ENCODE measurements at regions of chr14 and their contacts with region 1.

Region 1: DNA sequence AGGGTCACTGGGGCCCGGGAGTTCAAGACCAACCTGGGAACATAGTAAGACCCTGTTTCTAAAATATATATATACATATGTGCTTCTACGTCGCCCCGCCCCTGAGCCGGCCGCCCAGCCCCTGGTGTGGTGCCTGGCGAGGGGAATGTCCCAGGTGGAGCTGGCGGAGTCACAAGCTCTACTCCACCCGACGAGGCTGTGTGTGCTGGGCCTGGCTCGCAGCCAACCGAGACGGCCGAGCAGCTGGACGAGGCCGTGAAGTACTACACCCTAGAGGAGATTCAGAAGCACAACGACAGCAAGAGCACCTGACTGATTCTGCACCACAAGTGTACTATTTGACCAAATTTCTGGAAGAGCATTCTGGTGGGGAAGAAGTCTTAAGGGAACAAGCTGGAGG is 22.1 kb upstream of the ITPK1 start:
- DNase-seq: peak; percentile 89
- H3K4me3 ChIP-seq: no peak overlapping the region
- H3K27ac ChIP-seq: no peak overlapping the region
- H3K4me1 ChIP-seq: peaks cover 4 to 9% of the 10 kb centered on the region in 2 donors
- H3K27me3 ChIP-seq: no peaks in the 10 kb centered on the region
- CTCF ChIP-seq: peak in 5 of 6 experiments; percentile 14 to 62 (median 38)
- POLR2A ChIP-seq: no peak

Region 2: GRCh38 chr14:92951912-92952471 is 185.9 kb before region 1 on chr14:
- intact Hi-C with region 1: loop called (anchors 2 kb)
- DNase-seq: peak; percentile 75 to 77
- H3K4me3 ChIP-seq: no peak overlapping the region
- H3K27ac ChIP-seq: no peak overlapping the region
- H3K4me1 ChIP-seq: no peaks in the 10 kb centered on the region
- H3K27me3 ChIP-seq: no peaks in the 10 kb centered on the region
- CTCF ChIP-seq: peak; percentile 78 to 95 (median 94)
- POLR2A ChIP-seq: peak in 1 of 2 donors; percentile 7

Region 3: GRCh38 chr14:92973261-92973797 is 164.5 kb before region 1 on chr14:
- intact Hi-C with region 1: loop called (anchors 5 kb)
- DNase-seq: peak; percentile 78 to 90
- H3K4me3 ChIP-seq: no peak overlapping the region
- H3K27ac ChIP-seq: peak overlapping the region in 2 of 3 donors; percentile 49 to 70
- H3K4me1 ChIP-seq: peaks cover 0 to 40% of the 10 kb centered on the region in 2 donors
- H3K27me3 ChIP-seq: no peaks in the 10 kb centered on the region
- CTCF ChIP-seq: peak; percentile 69 to 96 (median 86)
- POLR2A ChIP-seq: no peak

Measured in thyroid gland (tissue), 4 donors.